WTC11 (cell line): ENCODE measurements at regions of chr17 and their contacts with region 1.

Region 1: DNA sequence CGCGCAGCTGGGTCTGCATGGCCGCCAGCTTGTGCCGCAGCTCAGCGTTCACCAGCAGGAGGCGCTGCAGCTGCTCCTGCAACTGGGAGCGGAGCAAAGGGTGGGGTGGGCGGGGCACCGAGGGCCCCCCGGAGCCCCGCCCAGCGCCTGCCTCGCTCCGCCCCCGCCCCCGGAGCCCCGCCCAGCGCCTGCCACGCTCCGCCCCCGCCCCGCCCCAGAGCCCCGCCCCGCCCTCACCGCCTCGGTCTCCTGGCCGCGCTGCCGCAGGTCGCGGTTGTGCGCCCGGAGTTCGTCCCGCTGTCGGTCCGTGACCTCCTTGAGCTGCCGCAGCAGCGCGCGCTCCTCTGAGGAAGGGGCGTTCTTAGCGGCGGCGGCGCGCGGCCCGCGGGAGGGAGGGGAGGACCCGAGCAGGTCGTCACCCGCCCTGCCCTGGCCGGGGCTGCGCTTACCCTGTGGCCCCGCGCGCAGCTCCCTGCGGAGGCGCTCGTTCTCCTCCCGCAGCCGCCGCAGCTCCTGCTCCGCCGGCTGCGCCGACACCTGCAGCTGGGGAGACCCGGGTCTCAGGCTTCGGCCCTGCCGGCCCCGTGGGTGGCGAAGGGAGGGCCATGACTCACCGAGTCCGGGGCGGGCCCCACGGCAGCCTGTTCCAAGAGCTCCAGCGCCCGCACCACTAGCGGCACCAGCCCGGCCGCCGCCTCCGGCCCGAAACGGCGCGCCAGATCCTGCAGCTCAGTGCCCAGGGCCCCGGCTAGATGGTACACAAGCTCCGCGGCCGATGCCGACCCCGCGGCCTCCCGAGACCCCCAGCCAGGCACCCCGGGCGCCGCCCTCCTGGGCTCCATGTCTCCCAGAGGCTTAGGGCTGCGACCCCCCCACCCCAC is 463 bp downstream of the RILP start:
- DNase-seq: peak; percentile 95
- ATAC-seq: peak; percentile 56
- H3K4me3 Mint-ChIP-seq: peak overlapping the region; percentile 72
- H3K27ac Mint-ChIP-seq: no peak overlapping the region
- H3K4me1 Mint-ChIP-seq: peaks cover 29% of the 10 kb centered on the region
- H3K27me3 Mint-ChIP-seq: peaks cover 3% of the 10 kb centered on the region
- CTCF ChIP-seq: peak; percentile 86; the same call in 1 of the 2 replicates

Region 2: GRCh38 chr17:1590031-1590748 is 59.0 kb before region 1 on chr17:
- CTCF ChIA-PET with region 1: interaction called, 19 read pairs
- POLR2A ChIA-PET with region 1: interaction called, 4 read pairs
- DNase-seq: no peak
- ATAC-seq: no peak
- H3K4me3 Mint-ChIP-seq: no peak overlapping the region
- H3K27ac Mint-ChIP-seq: no peak overlapping the region
- H3K4me1 Mint-ChIP-seq: peaks cover 29% of the 10 kb centered on the region
- H3K27me3 Mint-ChIP-seq: no peaks in the 10 kb centered on the region
- CTCF ChIP-seq: no peak

Region 3: DNA sequence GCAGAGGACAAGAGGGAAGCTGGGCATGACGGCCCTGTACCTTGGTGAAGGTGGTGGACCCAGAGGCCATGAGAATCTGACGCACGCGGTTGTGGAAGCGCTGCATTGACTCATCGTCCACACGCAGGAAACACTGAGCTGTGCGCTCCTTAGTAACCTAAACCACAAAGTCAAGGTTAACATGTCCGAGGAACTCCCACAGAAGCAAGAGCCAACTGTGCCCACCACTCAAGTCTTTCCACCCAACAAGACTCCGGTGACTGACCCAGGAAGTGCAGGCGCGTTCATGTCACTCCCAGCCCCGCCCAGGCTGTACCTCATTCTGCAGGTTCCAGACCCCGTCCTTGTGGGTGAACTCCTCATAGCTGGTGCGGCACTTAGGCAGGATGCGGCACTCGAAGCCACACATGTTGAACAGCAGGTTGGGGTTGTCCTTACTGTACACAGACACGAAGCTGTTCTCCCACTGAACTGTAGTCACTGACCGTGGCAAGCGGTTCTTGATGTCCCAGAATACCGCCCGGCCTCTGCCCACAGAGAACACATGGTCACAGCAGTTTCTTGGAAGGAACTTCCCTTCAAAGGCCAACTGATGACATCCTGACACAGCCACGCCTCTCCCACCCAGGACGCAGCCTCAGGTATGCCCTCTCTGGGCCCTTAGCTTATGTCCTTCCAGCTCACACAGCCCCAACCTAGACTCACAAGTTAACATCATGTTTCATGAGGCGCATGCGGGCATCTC is 24.0 kb after region 1 on chr17:
- CTCF ChIA-PET with region 1: interaction called, 56 read pairs
- POLR2A ChIA-PET with region 1: interaction called, 4 read pairs
- DNase-seq: no peak
- ATAC-seq: no peak
- H3K4me3 Mint-ChIP-seq: no peak overlapping the region
- H3K27ac Mint-ChIP-seq: no peak overlapping the region
- H3K4me1 Mint-ChIP-seq: no peaks in the 10 kb centered on the region
- H3K27me3 Mint-ChIP-seq: no peaks in the 10 kb centered on the region
- CTCF ChIP-seq: no peak

Region 4: DNA sequence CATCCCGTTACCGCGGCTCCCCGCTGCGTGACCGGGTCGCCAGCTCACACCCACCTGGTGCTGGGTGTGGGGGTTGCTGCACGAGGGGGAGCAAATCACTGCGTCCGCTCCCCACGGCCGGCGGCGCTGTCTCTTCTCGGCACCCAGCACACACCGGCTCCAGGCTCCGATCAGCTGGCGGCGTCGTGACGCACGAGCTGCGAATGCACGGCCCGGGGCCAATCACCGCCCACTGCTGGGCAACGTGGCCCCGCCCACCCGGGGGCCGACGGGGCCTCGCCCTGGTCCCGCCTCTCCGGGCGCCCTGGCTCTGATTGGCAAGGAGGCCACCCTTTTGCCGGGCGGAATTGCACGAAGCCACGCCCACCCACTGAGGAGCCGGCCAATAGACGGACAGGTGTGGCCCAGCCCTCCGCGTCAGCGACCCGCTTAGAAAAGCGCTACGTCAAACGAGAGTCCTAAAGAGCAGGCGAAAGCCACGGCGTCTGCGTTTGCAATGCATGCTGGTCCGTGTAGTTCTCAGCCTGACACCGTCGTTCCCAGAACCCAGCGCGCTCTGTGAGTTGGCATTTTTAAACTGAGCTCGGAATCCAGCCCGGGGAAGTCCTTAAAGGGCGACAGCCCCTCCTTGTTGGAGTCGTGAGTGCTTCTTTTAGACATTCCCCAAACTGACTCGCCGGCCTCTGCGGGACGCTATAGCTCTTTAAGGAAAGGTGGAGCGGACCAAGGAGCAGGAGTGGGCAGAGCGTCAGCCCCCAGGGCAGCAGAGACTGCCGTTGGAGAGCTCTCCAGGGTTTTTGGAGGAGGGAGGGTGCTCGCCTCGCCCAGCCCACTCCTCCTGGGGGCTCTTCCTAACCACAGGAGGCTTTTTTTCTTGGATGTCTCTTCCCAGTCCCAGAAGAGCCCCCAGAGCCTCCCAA is 67.1 kb after region 1 on chr17:
- CTCF ChIA-PET with region 1: interaction called, 32 read pairs
- POLR2A ChIA-PET with region 1: interaction called, 5 read pairs
- DNase-seq: peak; percentile 100
- ATAC-seq: peak; percentile 74
- H3K4me3 Mint-ChIP-seq: peak overlapping the region; percentile 93
- H3K27ac Mint-ChIP-seq: peak overlapping the region; percentile 99
- H3K4me1 Mint-ChIP-seq: peaks cover 24% of the 10 kb centered on the region
- H3K27me3 Mint-ChIP-seq: no peaks in the 10 kb centered on the region
- CTCF ChIP-seq: no peak

Region 5: DNA sequence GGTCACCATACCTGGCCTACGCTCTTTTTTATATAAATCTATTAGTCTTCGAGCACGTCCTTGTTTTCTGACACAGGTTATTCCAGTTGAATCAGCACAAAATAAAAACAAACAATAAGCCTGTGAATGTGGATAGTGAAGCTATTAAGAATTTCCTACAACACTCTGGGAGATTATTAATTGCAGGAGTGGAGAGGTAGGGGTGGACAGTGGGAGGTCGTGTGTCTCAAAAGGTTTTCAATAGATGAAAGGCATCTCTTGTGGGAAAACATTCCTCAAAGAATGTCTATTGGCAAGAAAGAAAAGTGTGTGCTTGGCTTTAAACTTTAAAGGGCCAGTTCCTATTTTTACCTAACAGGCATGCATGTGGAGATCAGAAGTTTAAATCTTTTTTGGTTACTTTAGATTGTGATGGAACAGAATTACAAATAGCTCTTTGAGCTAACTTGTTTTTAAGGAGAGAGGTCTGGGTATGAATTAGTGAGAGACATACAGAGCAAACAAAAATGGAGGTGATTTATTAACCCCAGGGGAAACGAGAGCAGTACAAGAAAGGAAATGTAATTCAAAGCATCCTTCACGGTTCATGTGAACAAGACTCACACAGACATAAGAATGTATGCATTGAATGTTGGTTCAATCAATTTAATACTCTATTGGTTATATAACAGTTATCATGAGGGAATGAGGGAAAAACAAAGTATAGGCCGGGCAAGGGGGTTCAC is 171.5 kb after region 1 on chr17:
- CTCF ChIA-PET with region 1: no interaction called
- POLR2A ChIA-PET with region 1: no interaction called
- DNase-seq: no peak
- ATAC-seq: no peak
- H3K4me3 Mint-ChIP-seq: no peak overlapping the region
- H3K27ac Mint-ChIP-seq: peak overlapping the region; percentile 28; the same call in 1 of the 2 replicates
- H3K4me1 Mint-ChIP-seq: peaks cover 3% of the 10 kb centered on the region; the same call in 1 of the 2 replicates
- H3K27me3 Mint-ChIP-seq: no peaks in the 10 kb centered on the region
- CTCF ChIP-seq: no peak